ENCODE measurements at regions of chr15 and their contacts with region 1.

Region 1: GRCh38 chr15:45714590-45715488 is 80.0 kb downstream of the SQOR start:
- DNase-seq: peak; percentile 59
- ATAC-seq: peak; percentile 88

Region 2: DNA sequence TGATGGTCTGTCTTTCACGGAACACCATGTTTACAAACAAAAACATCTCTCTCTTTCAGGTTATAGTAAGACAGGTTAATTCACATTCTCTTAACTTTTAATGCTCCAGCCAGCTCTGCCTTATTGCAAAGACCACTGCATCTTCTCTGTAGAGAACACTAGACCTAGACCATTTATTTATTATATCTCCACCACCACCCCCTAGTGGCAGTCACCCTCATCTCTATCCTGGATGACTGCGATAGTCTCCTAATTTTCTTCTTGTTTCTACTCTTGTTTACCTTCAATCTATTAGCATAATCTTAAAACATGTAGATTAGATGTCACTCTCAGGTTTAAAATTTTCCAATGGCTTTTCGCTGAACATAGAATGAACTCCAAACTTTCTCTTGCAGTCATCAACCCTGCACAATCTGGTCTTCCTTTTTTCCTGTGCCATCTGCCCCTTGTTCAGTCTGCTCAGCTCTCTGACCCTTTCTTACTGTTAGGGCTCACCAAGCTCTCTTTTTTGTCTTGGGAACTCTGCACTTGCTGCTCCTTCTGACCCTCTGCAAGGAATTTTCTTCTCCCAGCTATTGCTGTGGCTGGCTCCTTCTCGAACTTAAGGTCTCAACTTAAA is 75.6 kb after region 1 on chr15:
- intact Hi-C with region 1: loop called (anchors 1 kb)
- DNase-seq: peak; percentile 31
- ATAC-seq: peak; percentile 58